Activated T-helper 1 cell treated with anti-CD3 and anti-CD28 coated beads, Interleukin-12 subunit alpha, Interleukin-12 subunit beta, Interleukin-2, Interleukin-4 antibody, amounts not matched to agents 30 ng/mL and 10 ng/mL and 1 ng/mL, durations not matched to agents 14 hours and 24 hours and 36 hours (primary cell): ENCODE measurements at regions of chr1 and their contacts with region 1.

Region 1: GRCh38 chr1:236795035-236795756 is at the start of gene MTR:
- DNase-seq: peak; percentile 94
- H3K4me3 Mint-ChIP-seq: peak within 1 kb of the TSS; percentile 89
- H3K27ac Mint-ChIP-seq: peak within 1 kb of the TSS; percentile 96
- H3K4me1 Mint-ChIP-seq: peaks cover 37% of the 10 kb centered on the region
- H3K27me3 Mint-ChIP-seq: peaks cover 13% of the 10 kb centered on the region
- total RNA-seq, gene MTR: 48.9 and 49.2 TPM in 2 replicates

Region 2: DNA sequence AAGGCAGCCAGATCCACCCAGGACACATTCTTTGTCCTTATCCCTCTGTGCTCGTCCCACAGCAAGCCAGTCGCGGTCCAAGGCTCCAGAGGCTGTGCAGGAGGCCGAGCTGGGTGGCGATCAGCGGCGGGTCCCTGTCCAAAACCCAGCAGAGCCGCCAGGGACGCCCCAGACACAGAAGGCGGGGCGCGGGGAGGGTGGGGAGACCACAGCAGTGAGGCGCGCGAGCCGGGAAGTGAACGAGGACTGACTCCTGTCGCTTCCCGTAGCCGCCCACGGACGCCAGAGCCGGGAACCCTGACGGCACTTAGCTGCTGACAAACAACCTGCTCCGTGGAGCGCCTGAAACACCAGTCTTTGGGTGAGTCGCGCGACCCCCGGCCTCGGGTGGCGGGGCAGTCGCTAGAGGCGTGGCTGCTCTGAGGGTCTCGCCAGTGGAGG is 271.5 kb before region 1 on chr1 and contains the start of gene LGALS8:
- intact Hi-C with region 1: loop called (anchors 2 kb)
- DNase-seq: peak; percentile 78
- H3K4me3 Mint-ChIP-seq: peak within 1 kb of the TSS; percentile 99
- H3K27ac Mint-ChIP-seq: peak within 1 kb of the TSS; percentile 100
- H3K4me1 Mint-ChIP-seq: peaks cover 36% of the 10 kb centered on the region
- H3K27me3 Mint-ChIP-seq: no peaks in the 10 kb centered on the region
- total RNA-seq, gene LGALS8: 56.6 and 66.2 TPM in 2 replicates

Region 3: GRCh38 chr1:236685917-236686814 is 109.0 kb before region 1 on chr1 and contains the start of gene ACTN2:
- intact Hi-C with region 1: loop called (anchors 5 kb)
- DNase-seq: peak; percentile 22
- H3K4me3 Mint-ChIP-seq: peak within 1 kb of the TSS; percentile 66
- H3K27ac Mint-ChIP-seq: no peak within 1 kb of the TSS
- H3K4me1 Mint-ChIP-seq: peaks cover 8% of the 10 kb centered on the region
- H3K27me3 Mint-ChIP-seq: peaks cover 49% of the 10 kb centered on the region
- total RNA-seq, gene ACTN2: 0.10 TPM in 1 of 2 replicates, not detected in the other

Region 4: GRCh38 chr1:236759252-236759859 is 35.8 kb before region 1 on chr1:
- intact Hi-C with region 1: loop called (anchors 2 kb)
- DNase-seq: no peak
- H3K4me3 Mint-ChIP-seq: no peak overlapping the region
- H3K27ac Mint-ChIP-seq: no peak overlapping the region
- H3K4me1 Mint-ChIP-seq: peaks cover 5% of the 10 kb centered on the region
- H3K27me3 Mint-ChIP-seq: peaks cover 2% of the 10 kb centered on the region

Region 5: GRCh38 chr1:236868625-236869467 is 73.7 kb after region 1 on chr1:
- intact Hi-C with region 1: loop called (anchors 2 kb)
- DNase-seq: peak; percentile 14
- H3K4me3 Mint-ChIP-seq: no peak overlapping the region
- H3K27ac Mint-ChIP-seq: no peak overlapping the region
- H3K4me1 Mint-ChIP-seq: peaks cover 18% of the 10 kb centered on the region
- H3K27me3 Mint-ChIP-seq: no peaks in the 10 kb centered on the region